ENCODE measurements at regions of chr9 and their contacts with region 1.

Region 1: DNA sequence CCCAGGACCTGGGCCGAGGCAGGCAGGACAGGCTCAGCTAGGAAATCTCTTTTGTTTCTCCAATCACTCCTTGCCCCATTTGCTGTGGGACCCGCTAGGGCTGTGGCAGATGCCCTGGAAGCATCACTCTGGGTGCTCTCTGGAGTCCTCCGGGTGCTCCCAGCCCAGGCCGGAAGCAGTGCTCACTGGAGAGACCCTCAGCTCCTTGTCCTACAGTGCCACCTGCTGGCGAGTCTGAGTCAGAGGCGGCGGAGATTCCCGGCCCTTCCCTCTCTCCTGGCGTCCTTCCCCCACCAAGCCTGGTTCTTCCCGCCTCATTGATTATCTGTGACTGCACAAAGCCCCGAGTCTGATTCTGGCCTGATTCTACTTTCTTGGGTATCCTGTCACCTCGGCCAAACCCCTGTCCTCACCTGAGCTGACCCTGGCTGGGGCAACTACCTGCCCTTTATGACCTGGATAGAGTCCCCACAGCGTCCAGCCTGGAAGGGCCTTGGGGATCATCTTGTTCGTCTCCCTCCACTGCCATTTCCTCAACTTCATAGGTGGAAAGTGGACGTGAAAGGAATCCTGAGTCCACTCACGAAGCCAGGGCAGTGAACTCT is 7.3 kb upstream of the BARHL1 start:
- DNase-seq: peak; percentile 86 to 93 (median 89)
- H3K4me3 ChIP-seq: no peak overlapping the region
- H3K27ac ChIP-seq: no peak overlapping the region
- H3K4me1 ChIP-seq: no peaks in the 10 kb centered on the region
- H3K27me3 ChIP-seq: peaks cover 32% of the 10 kb centered on the region
- CTCF ChIP-seq: peak; percentile 79

Region 2: DNA sequence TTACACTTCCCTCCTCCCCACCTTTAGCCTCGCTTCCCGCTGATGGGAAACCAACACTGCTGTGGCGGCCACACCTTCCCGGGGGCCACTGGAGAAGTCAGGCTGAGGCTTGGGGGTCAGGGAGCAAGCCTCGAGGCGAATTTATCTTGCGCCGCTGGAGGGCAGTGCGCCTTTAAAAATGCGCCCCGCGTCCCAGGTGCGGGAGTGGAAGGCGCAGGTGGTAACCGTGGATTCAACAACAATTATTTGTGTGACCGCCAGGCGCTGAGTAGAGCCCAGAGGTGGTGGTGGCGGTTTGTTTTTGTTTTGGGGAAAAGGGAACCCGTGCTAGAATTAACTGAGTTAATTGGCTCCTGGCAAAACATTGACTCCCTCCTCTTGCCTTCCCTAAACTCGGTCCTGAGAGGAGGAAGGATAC is 164.0 kb before region 1 on chr9:
- intact Hi-C with region 1: loop called (anchors 10 kb)
- DNase-seq: peak; percentile 66 to 80 (median 78)
- H3K4me3 ChIP-seq: peak overlapping the region in 1 of 3 donors; percentile 21
- H3K27ac ChIP-seq: no peak overlapping the region
- H3K4me1 ChIP-seq: peaks cover 0 to 17% (median 0%) of the 10 kb centered on the region in 3 donors
- H3K27me3 ChIP-seq: peaks cover 4% of the 10 kb centered on the region
- CTCF ChIP-seq: peak; percentile 65

Region 3: DNA sequence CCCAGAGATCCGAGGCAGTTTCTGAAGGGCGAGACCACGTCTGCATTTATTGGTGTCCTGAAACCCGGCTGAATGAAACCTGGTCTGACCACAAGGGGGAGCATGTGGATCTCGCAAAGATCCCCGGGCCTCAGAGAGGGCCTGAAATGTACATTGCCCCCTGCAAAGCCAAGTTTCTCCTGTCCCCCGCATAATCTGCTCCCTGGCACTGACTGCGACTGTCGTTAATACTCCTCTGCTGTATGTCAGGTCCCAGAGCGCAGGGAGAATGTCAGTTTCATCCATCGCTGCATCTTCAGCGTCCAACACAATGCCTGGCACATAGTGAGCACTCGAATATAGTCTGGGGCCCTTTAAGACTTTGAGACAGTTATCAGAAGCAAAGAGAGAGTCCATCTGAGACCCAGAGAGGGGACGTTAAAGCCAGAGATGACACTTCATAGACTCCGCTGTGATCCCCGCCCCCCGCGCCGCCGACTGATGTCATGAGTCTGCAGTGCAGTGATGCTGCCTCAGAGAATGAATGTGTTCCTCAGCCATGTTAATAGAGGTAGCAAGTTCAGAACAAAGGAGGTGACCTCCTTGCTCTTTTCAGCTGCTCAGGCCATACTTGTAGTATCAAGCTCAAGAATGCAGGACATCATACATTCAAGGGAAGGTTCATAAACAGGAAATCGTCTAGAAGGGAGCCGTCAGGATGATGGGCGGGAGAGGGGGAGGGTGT is 67.2 kb before region 1 on chr9:
- intact Hi-C with region 1: loop called (anchors 5 kb)
- DNase-seq: peak; percentile 70 to 87 (median 84)
- H3K4me3 ChIP-seq: no peak overlapping the region
- H3K27ac ChIP-seq: no peak overlapping the region
- H3K4me1 ChIP-seq: no peaks in the 10 kb centered on the region
- H3K27me3 ChIP-seq: no peaks in the 10 kb centered on the region
- CTCF ChIP-seq: peak; percentile 82